MCF 10A (cell line): ENCODE measurements at regions of chr15 and their contacts with region 1.

Region 1: DNA sequence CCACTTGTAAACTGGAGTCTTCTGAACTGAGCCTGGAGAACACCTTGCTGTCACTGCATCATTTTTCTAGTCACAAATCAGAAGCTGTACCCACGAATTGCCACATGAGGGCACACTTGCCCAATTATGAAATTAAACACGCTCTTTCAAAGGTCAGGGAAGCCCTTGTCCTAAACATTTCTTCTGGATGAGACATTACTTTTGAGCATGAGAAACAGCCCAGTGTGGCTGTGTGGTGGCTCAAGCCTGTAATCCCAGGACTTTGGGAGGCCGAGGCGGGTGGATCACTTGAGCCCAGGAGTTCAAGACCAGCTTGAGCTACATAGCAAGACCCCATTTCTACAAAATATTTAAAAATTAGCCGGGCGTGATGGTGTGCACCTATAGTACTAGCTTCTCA is 27.5 kb upstream of the CFAP161 start:
- DNase-seq: peak; percentile 76
- H3K4me3 Mint-ChIP-seq: no peak overlapping the region
- H3K27ac Mint-ChIP-seq: no peak overlapping the region
- H3K4me1 Mint-ChIP-seq: peaks cover 23% of the 10 kb centered on the region
- H3K27me3 Mint-ChIP-seq: no peaks in the 10 kb centered on the region
- CTCF ChIP-seq: peak; percentile 75

Region 2: DNA sequence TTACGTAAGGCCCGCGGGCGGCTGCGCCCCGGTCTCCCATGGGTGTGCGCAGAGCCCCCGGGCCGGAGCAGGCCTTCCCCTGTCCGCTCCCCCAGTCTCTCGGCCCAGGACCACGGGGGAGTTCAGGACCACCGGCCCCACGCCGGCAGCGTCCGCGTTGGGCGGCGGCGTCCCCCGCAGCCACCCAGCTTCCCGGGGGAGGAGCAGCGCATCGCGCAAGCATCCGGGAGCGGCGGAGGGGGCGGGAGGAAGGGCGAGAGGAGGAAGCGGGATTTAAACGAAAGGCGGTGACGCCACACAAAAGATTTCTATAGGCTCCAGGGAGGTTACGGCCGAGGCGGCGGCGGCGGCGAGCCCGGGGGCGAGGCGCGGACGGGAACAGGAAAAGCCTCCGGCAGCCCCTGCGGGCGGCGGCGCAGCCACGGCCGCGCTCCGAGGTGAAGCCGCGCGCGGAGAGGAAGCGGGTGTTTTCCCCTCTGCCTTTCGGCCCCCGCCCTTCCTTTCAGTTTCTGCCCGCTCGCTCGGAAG is 105.9 kb before region 1 on chr15 and contains the start of gene TLNRD1:
- CTCF ChIA-PET with region 1: interaction called, 3 read pairs
- POLR2A ChIA-PET with region 1: no interaction called
- intact Hi-C with region 1: loop called (anchors 5 kb)
- DNase-seq: peak; percentile 91
- H3K4me3 Mint-ChIP-seq: peak within 1 kb of the TSS; percentile 82
- H3K27ac Mint-ChIP-seq: peak within 1 kb of the TSS; percentile 64
- H3K4me1 Mint-ChIP-seq: peaks cover 25% of the 10 kb centered on the region
- H3K27me3 Mint-ChIP-seq: no peaks in the 10 kb centered on the region
- CTCF ChIP-seq: no peak
- total RNA-seq, gene TLNRD1: 17.1 and 18.3 TPM in 2 replicates

Region 3: GRCh38 chr15:81011593-81011992 is 95.0 kb before region 1 on chr15:
- CTCF ChIA-PET with region 1: no interaction called
- POLR2A ChIA-PET with region 1: no interaction called
- intact Hi-C with region 1: no loop called
- DNase-seq: no peak
- H3K4me3 Mint-ChIP-seq: no peak overlapping the region
- H3K27ac Mint-ChIP-seq: no peak overlapping the region
- H3K4me1 Mint-ChIP-seq: peaks cover 4% of the 10 kb centered on the region
- H3K27me3 Mint-ChIP-seq: no peaks in the 10 kb centered on the region
- CTCF ChIP-seq: no peak

Region 4: GRCh38 chr15:81054236-81054635 is 52.3 kb before region 1 on chr15:
- CTCF ChIA-PET with region 1: no interaction called
- POLR2A ChIA-PET with region 1: no interaction called
- intact Hi-C with region 1: no loop called
- DNase-seq: peak; percentile 30
- H3K4me3 Mint-ChIP-seq: no peak overlapping the region
- H3K27ac Mint-ChIP-seq: no peak overlapping the region
- H3K4me1 Mint-ChIP-seq: no peaks in the 10 kb centered on the region
- H3K27me3 Mint-ChIP-seq: no peaks in the 10 kb centered on the region
- CTCF ChIP-seq: no peak

Region 5: DNA sequence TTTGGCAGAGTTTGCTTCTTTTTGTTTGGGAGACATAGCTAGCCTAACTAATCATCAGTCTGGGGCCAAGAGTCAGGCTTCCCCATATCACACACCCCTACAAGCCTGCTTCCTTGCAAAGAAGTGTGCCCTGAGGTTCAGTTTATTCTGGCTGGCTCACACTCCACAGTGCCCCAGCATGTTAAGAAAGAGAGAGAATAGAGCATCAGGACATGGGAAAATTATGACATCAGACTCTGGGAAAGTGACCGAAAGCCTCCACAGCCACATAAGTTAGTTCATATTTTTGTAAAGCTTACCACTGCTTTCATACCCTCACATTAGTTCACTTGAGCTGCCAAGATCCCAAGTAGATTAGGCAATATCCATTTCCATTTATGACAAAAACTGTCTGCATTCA is 35.4 kb before region 1 on chr15:
- CTCF ChIA-PET with region 1: no interaction called
- POLR2A ChIA-PET with region 1: no interaction called
- intact Hi-C with region 1: no loop called
- DNase-seq: peak; percentile 55
- H3K4me3 Mint-ChIP-seq: no peak overlapping the region
- H3K27ac Mint-ChIP-seq: no peak overlapping the region
- H3K4me1 Mint-ChIP-seq: peaks cover 19% of the 10 kb centered on the region
- H3K27me3 Mint-ChIP-seq: no peaks in the 10 kb centered on the region
- CTCF ChIP-seq: no peak

Region 6: GRCh38 chr15:81091889-81092558 is 14.5 kb before region 1 on chr15:
- CTCF ChIA-PET with region 1: interaction called, 11 read pairs
- POLR2A ChIA-PET with region 1: no interaction called
- intact Hi-C with region 1: no loop called
- DNase-seq: peak; percentile 84
- H3K4me3 Mint-ChIP-seq: no peak overlapping the region
- H3K27ac Mint-ChIP-seq: no peak overlapping the region
- H3K4me1 Mint-ChIP-seq: peaks cover 6% of the 10 kb centered on the region
- H3K27me3 Mint-ChIP-seq: peaks cover 10% of the 10 kb centered on the region
- CTCF ChIP-seq: no peak

Region 7: DNA sequence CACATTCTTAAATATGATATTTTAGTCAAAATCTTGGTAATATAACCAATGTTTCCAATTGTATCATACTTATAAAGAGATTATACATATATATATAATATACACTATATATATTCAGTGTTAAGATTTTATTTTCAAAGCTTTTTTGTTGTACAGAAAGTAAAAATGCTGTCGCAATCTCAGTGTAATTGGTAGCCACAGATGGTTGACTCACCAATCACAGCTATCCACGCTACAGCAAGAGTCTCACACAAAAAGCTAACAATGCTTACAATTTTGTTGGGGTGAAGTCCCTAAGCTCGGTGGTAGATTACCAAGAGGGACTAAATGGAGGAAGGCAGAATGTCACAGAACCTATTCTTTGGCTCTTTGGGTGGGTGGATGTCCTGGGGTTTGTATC is 10.6 kb after region 1 on chr15:
- CTCF ChIA-PET with region 1: interaction called, 16 read pairs
- POLR2A ChIA-PET with region 1: interaction called, 4 read pairs
- intact Hi-C with region 1: no loop called
- DNase-seq: peak; percentile 30
- H3K4me3 Mint-ChIP-seq: no peak overlapping the region
- H3K27ac Mint-ChIP-seq: peak overlapping the region; percentile 87
- H3K4me1 Mint-ChIP-seq: peaks cover 23% of the 10 kb centered on the region
- H3K27me3 Mint-ChIP-seq: no peaks in the 10 kb centered on the region
- CTCF ChIP-seq: no peak

Region 8: GRCh38 chr15:81182756-81183438 is 76.3 kb after region 1 on chr15:
- CTCF ChIA-PET with region 1: no interaction called
- POLR2A ChIA-PET with region 1: no interaction called
- intact Hi-C with region 1: no loop called
- DNase-seq: no peak
- H3K4me3 Mint-ChIP-seq: no peak overlapping the region
- H3K27ac Mint-ChIP-seq: no peak overlapping the region
- H3K4me1 Mint-ChIP-seq: no peaks in the 10 kb centered on the region
- H3K27me3 Mint-ChIP-seq: no peaks in the 10 kb centered on the region
- CTCF ChIP-seq: no peak

Region 9: DNA sequence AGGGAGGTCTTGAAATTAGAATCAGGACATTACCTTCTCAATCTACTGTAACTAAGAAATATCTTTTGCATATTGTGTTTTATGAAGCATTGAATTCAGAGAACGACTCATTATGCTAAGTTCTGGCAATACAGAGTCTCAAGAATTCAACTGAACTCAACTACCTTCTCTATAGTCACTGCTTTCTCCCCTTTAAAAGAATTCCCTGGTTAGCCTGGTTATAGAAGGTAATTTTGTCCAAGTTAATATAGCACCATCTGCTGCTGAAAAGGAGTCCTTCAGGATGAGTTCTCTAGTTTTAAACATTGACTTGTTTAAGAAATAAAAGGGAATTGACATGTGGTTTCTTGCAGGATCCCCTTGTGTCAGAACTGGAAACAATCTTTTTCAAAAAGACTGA is 150.4 kb after region 1 on chr15:
- CTCF ChIA-PET with region 1: interaction called, 54 read pairs
- POLR2A ChIA-PET with region 1: interaction called, 4 read pairs
- intact Hi-C with region 1: loop called (anchors 1 kb)
- DNase-seq: peak; percentile 45
- H3K4me3 Mint-ChIP-seq: no peak overlapping the region
- H3K27ac Mint-ChIP-seq: no peak overlapping the region
- H3K4me1 Mint-ChIP-seq: peaks cover 18% of the 10 kb centered on the region
- H3K27me3 Mint-ChIP-seq: no peaks in the 10 kb centered on the region
- CTCF ChIP-seq: peak; percentile 54